PC-9 (cell line): ENCODE measurements at regions of chr9 and their contacts with region 1.

Region 1: DNA sequence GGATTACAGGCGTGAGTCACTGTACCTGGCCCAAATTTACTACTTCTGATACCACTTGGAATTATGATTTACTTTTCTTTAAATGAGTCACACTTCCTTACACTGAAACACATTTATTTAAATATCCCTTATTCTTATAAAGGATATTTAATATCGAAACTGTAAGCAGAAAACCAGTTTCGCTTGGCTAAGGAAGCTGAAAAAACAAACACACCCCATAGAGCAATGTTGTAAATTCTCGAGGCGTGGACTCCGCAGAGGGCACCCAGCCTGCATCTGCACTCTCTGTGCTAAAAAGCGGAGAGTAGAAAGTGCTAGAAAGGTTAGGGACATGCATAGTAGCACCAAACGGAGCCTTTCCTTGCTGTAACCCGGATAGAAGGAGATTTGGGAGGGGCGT is 86.5 kb downstream of the HMCN2 start:
- DNase-seq: peak; percentile 64 to 97
- H3K4me3 ChIP-seq: peak overlapping the region; percentile 9; the same call in 1 of the 2 replicates
- H3K27ac ChIP-seq: peak overlapping the region; percentile 97
- H3K4me1 ChIP-seq: peaks cover 17% of the 10 kb centered on the region
- H3K27me3 ChIP-seq: no peaks in the 10 kb centered on the region
- CTCF ChIP-seq: no peak

Region 2: GRCh38 chr9:130243015-130243734 is 108.9 kb before region 1 on chr9:
- CTCF ChIA-PET with region 1: no interaction called
- POLR2A ChIA-PET with region 1: no interaction called
- intact Hi-C with region 1: loop called (anchors 2 kb)
- DNase-seq: peak in 1 of 2 experiments; percentile 70
- H3K4me3 ChIP-seq: no peak overlapping the region
- H3K27ac ChIP-seq: no peak overlapping the region
- H3K4me1 ChIP-seq: no peaks in the 10 kb centered on the region
- H3K27me3 ChIP-seq: no peaks in the 10 kb centered on the region
- CTCF ChIP-seq: peak; percentile 98

Region 3: DNA sequence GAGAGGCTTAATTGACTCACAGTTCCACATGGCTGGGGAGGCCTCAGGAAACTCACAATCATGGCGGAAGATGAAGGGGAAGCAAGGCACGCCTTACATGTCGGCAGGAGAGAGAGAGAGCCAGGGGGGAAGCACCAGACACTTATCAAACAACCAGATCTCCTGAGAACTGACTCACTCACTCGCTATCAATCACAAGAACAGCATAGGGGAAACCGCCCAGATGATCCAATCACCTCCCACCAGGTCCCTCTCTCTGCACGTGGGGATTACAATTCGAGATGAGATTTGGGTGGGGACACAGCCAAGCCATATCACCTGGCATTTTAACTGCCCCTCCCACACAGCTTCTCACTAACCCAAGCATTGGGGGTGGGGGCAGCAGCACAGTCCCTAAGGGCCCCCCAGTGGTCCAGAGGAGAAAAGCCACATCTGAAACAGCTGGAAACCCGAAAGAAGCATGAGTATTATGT is 16.6 kb after region 1 on chr9:
- CTCF ChIA-PET with region 1: interaction called, 4 read pairs
- POLR2A ChIA-PET with region 1: interaction called, 19 read pairs
- intact Hi-C with region 1: no loop called
- DNase-seq: peak; percentile 60 to 76
- H3K4me3 ChIP-seq: no peak overlapping the region
- H3K27ac ChIP-seq: no peak overlapping the region
- H3K4me1 ChIP-seq: peaks cover 33% of the 10 kb centered on the region
- H3K27me3 ChIP-seq: no peaks in the 10 kb centered on the region
- CTCF ChIP-seq: 0 out of 2 replicates have a peak, but pooled peaks have one; percentile 26

Region 4: GRCh38 chr9:130417602-130418001 is 65.5 kb after region 1 on chr9:
- CTCF ChIA-PET with region 1: no interaction called
- POLR2A ChIA-PET with region 1: interaction called, 11 read pairs
- intact Hi-C with region 1: no loop called
- DNase-seq: peak in 1 of 2 experiments; percentile 32
- H3K4me3 ChIP-seq: no peak overlapping the region
- H3K27ac ChIP-seq: no peak overlapping the region
- H3K4me1 ChIP-seq: peaks cover 15% of the 10 kb centered on the region
- H3K27me3 ChIP-seq: no peaks in the 10 kb centered on the region
- CTCF ChIP-seq: 0 out of 2 replicates have a peak, but pooled peaks have one; percentile 29

Region 5: DNA sequence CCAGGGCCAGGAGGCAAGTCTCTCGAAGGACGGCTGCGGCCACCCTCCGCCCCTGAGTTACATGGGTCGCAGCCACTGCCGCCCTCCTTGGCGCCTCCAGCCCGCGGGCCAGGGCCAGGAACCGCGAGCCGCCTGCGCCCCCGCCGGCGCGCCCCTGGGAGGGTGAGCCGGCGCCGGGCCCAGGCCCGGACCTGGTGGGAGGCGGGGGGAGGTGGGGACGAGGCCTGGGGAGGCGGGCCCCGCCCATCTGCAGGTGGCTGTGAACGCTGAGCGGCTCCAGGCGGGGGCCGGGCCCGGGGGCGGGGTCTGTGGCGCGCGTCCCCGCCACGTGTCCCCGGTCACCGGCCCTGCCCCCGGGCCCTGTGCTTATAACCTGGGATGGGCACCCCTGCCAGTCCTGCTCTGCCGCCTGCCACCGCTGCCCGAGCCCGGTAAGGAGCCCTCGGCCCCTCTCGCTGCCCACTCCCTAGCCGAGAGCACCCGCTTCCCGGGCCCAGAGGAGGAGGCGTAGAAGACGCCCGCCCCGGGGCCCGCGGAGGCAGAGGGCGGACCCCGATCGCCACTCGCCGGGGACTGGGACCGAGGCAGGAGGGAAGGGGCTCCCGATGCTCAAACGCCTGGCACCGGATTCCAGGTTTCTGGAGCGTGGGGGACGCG is 92.6 kb after region 1 on chr9 and contains the start of gene ASS1:
- CTCF ChIA-PET with region 1: no interaction called
- POLR2A ChIA-PET with region 1: no interaction called
- intact Hi-C with region 1: loop called (anchors 1 kb)
- DNase-seq: peak; percentile 69 to 97
- H3K4me3 ChIP-seq: peak within 1 kb of the TSS; percentile 87
- H3K27ac ChIP-seq: no peak within 1 kb of the TSS
- H3K4me1 ChIP-seq: peaks cover 32% of the 10 kb centered on the region
- H3K27me3 ChIP-seq: no peaks in the 10 kb centered on the region
- CTCF ChIP-seq: no peak
- total RNA-seq, gene ASS1: 255 and 371 TPM in 2 replicates

Region 6: DNA sequence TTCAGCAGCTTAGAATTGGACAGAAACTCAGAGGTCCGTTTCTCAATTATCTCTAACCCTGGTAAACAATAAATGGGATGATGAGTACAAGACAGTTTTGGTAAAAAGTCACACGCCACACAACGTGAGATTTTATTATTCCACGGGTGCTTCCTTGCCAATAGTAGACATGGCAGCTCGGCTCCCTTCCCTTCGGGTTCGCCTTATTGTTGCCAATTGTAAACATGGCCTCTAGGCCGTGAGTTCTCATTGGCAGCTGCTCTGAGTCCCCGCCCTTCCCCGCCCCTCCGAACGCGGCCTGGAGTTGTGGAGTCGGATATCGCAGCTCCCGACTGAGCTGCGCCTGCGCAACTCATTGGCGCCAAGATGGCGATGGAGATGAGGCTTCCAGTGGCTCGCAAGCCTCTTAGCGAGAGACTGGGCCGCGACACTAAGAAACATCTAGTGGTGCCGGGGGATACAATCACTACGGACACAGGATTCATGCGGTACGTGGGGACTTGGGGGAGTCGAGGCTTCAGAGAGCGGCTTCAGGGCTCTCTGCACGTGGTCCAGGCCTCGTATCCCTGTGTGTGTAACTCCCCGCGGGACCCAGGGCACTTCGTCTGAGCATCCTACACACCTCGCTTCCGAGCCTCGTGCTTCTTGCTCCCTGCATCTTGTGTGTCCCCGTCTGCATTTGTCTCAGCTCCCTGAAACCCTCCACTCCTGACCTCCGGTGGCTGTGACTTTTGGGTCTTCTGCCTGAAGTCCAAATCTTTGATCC is 341.5 kb after region 1 on chr9 and contains the start of gene EXOSC2:
- CTCF ChIA-PET with region 1: no interaction called
- POLR2A ChIA-PET with region 1: no interaction called
- intact Hi-C with region 1: loop called (anchors 1 kb)
- DNase-seq: peak; percentile 90 to 95
- H3K4me3 ChIP-seq: peak within 1 kb of the TSS; percentile 88
- H3K27ac ChIP-seq: no peak within 1 kb of the TSS
- H3K4me1 ChIP-seq: peaks cover 22% of the 10 kb centered on the region
- H3K27me3 ChIP-seq: no peaks in the 10 kb centered on the region
- CTCF ChIP-seq: no peak
- total RNA-seq, gene EXOSC2: 49.5 and 52.0 TPM in 2 replicates